Lower leg skin (tissue), 4 donors: ENCODE measurements at regions of chr10 and their contacts with region 1.

Region 1: DNA sequence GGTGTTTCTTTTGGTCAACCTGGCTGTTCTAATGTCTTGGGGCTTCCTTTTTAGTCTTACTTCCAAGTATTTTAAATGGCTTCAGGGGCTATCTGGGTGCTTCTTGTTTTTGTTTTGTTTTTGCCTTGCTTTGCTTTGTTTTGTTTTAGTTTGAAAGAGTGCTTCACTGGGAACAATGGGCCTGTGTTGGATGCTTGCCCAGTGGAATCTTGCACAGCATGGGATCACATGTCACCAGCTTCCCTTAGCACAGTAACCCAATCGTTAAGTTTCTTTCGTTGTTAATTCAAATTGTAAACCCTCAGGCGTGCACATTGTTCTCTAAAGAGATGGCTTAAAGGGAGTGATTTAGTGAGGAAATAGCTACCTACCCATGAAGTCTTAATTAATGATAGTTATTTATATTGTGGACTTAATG is 8.9 kb downstream of the COL17A1 start:
- DNase-seq: no peak
- H3K4me3 ChIP-seq: no peak overlapping the region
- CTCF ChIP-seq: no peak
- POLR2A ChIP-seq: no peak

Region 2: DNA sequence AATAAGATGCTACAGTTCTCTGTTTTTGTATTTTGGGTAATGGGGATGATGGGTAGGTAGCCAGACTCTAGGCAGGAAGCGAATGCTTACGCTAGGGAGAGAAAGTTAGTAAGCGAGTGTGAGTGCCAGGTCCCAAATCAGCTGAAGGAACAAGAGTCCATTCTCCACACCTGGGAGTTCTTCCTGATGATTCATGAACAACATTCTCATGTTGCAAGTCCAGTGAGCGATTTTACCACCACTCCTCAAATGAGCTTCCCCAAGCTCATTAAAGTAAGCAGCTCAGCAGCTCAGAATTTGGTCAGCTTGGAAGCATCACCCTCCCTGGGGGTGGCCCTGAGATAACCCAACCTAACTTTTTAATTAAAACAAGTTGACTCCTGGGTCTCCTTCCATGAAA is 248.6 kb before region 1 on chr10:
- intact Hi-C with region 1: no loop called
- DNase-seq: no peak
- H3K4me3 ChIP-seq: no peak overlapping the region
- CTCF ChIP-seq: no peak
- POLR2A ChIP-seq: no peak

Region 3: GRCh38 chr10:103936022-103936421 is 140.7 kb before region 1 on chr10:
- intact Hi-C with region 1: no loop called
- DNase-seq: no peak
- H3K4me3 ChIP-seq: no peak overlapping the region
- CTCF ChIP-seq: no peak
- POLR2A ChIP-seq: no peak

Region 4: DNA sequence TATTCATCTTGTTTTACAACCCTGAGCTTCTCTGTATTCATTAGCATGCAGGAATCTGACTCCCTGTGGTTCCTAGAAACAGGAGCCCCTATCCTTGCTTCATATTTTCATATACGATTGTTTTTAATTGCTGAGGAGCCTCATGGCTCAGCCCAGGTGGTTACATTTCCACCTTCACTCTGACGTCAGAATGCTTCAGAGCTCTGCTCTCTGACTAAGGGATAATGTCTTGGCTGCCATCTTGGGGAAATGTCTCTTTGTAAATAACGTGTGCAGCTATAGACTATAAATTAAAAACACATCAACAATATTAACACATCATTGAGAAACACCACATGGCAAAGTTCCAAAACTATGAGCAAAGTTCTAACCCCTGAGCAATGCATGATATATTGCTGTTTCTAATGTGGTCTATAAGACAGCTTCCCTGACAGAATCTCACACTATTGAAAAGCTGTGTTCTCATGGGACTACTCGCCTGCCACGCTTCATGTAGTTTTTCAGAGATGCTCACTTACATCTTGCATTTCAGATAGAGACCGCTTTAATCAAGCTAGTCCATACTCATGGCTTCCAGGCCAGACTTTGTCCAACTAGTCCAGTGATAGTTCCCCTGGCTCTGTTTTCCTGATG is 791.3 kb after region 1 on chr10:
- intact Hi-C with region 1: loop called (anchors 5 kb)
- DNase-seq: no peak
- H3K4me3 ChIP-seq: no peak overlapping the region
- CTCF ChIP-seq: no peak
- POLR2A ChIP-seq: no peak